ENCODE measurements at regions of chr10 and their contacts with region 1.

Region 1: GRCh38 chr10:52215745-52216361 is 98.2 kb upstream of the DKK1 start:
- DNase-seq: peak; percentile 62 to 76
- H3K4me3 ChIP-seq: no peak overlapping the region
- H3K4me3 Mint-ChIP-seq: no peak overlapping the region
- H3K27ac Mint-ChIP-seq: no peak overlapping the region
- H3K4me1 ChIP-seq: peaks cover 14% of the 10 kb centered on the region
- H3K4me1 Mint-ChIP-seq: peaks cover 7% of the 10 kb centered on the region
- H3K27me3 ChIP-seq: no peaks in the 10 kb centered on the region
- H3K27me3 Mint-ChIP-seq: no peaks in the 10 kb centered on the region
- CTCF ChIP-seq: peak; percentile 84 to 92

Region 2: GRCh38 chr10:51063659-51064535 is 1152.0 kb before region 1 on chr10:
- CTCF ChIA-PET with region 1: no interaction called
- POLR2A ChIA-PET with region 1: no interaction called
- intact Hi-C with region 1: loop called (anchors 5 kb)
- DNase-seq: peak in 1 of 2 experiments; percentile 46
- H3K4me3 ChIP-seq: no peak overlapping the region
- H3K4me3 Mint-ChIP-seq: no peak overlapping the region
- H3K27ac Mint-ChIP-seq: no peak overlapping the region
- H3K4me1 ChIP-seq: no peaks in the 10 kb centered on the region
- H3K4me1 Mint-ChIP-seq: no peaks in the 10 kb centered on the region
- H3K27me3 ChIP-seq: no peaks in the 10 kb centered on the region
- H3K27me3 Mint-ChIP-seq: peaks cover 10% of the 10 kb centered on the region
- CTCF ChIP-seq: peak; percentile 61 to 73

Region 3: GRCh38 chr10:51629934-51630639 is 585.8 kb before region 1 on chr10:
- CTCF ChIA-PET with region 1: no interaction called
- POLR2A ChIA-PET with region 1: no interaction called
- intact Hi-C with region 1: loop called (anchors 10 kb)
- DNase-seq: no peak
- H3K4me3 ChIP-seq: no peak overlapping the region
- H3K4me3 Mint-ChIP-seq: no peak overlapping the region
- H3K27ac Mint-ChIP-seq: no peak overlapping the region
- H3K4me1 ChIP-seq: no peaks in the 10 kb centered on the region
- H3K4me1 Mint-ChIP-seq: no peaks in the 10 kb centered on the region
- H3K27me3 ChIP-seq: no peaks in the 10 kb centered on the region
- H3K27me3 Mint-ChIP-seq: peaks cover 11% of the 10 kb centered on the region
- CTCF ChIP-seq: no peak

Region 4: GRCh38 chr10:51960494-51960895 is 255.4 kb before region 1 on chr10:
- CTCF ChIA-PET with region 1: interaction called, 3 read pairs
- POLR2A ChIA-PET with region 1: no interaction called
- intact Hi-C with region 1: loop called (anchors 1 kb)
- DNase-seq: peak in 1 of 2 experiments; percentile 59
- H3K4me3 ChIP-seq: no peak overlapping the region
- H3K4me3 Mint-ChIP-seq: no peak overlapping the region
- H3K27ac Mint-ChIP-seq: no peak overlapping the region
- H3K4me1 ChIP-seq: no peaks in the 10 kb centered on the region
- H3K4me1 Mint-ChIP-seq: no peaks in the 10 kb centered on the region
- H3K27me3 ChIP-seq: no peaks in the 10 kb centered on the region
- H3K27me3 Mint-ChIP-seq: peaks cover 31% of the 10 kb centered on the region
- CTCF ChIP-seq: peak; percentile 73 to 78

Region 5: GRCh38 chr10:52048051-52048450 is 167.8 kb before region 1 on chr10:
- CTCF ChIA-PET with region 1: no interaction called
- POLR2A ChIA-PET with region 1: no interaction called
- intact Hi-C with region 1: loop called (anchors 5 kb)
- DNase-seq: no peak
- H3K4me3 ChIP-seq: no peak overlapping the region
- H3K4me3 Mint-ChIP-seq: no peak overlapping the region
- H3K27ac Mint-ChIP-seq: no peak overlapping the region
- H3K4me1 ChIP-seq: peaks cover 67% of the 10 kb centered on the region
- H3K4me1 Mint-ChIP-seq: peaks cover 54% of the 10 kb centered on the region
- H3K27me3 ChIP-seq: no peaks in the 10 kb centered on the region
- H3K27me3 Mint-ChIP-seq: no peaks in the 10 kb centered on the region
- CTCF ChIP-seq: no peak

Region 6: DNA sequence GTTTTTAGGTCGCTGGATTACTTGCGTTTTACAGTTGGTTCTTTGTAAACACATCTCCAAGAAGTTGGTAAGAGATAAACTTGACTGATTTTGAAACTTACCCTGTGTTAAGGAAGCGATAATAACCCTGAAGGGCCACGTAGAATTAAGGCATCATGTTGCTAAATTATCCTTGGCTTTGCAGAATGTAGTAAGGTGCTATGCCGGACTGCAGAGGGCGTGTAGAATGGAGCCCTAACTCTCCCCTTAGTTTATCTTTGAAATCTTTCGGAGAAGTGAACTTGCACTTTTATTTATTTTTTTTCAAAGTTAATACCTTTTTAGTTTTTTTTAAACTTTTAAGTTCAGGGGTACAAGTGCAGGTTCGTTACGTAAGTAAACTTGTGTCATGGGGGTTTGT is 110.6 kb before region 1 on chr10:
- CTCF ChIA-PET with region 1: no interaction called
- POLR2A ChIA-PET with region 1: no interaction called
- intact Hi-C with region 1: loop called (anchors 1 kb)
- DNase-seq: no peak
- H3K4me3 ChIP-seq: no peak overlapping the region
- H3K4me3 Mint-ChIP-seq: no peak overlapping the region
- H3K27ac Mint-ChIP-seq: no peak overlapping the region
- H3K4me1 ChIP-seq: no peaks in the 10 kb centered on the region
- H3K4me1 Mint-ChIP-seq: no peaks in the 10 kb centered on the region
- H3K27me3 ChIP-seq: no peaks in the 10 kb centered on the region
- H3K27me3 Mint-ChIP-seq: no peaks in the 10 kb centered on the region
- CTCF ChIP-seq: peak; percentile 29 to 33

Measured in Caco-2 (cell line).